Activated CD4-positive, alpha-beta T cell treated with anti-CD3 and anti-CD28 coated beads, Interleukin-2, amount 10 ng/mL, durations not matched to agents 7 days and 5 days (primary cell): ENCODE measurements at regions of chr2 and their contacts with region 1.

Region 1: GRCh38 chr2:53970724-53971602 is at the start of gene PSME4:
- DNase-seq: peak; percentile 95
- H3K4me3 Mint-ChIP-seq: peak within 1 kb of the TSS; percentile 88
- H3K27ac Mint-ChIP-seq: peak within 1 kb of the TSS; percentile 96
- H3K4me1 Mint-ChIP-seq: peaks cover 39% of the 10 kb centered on the region
- H3K27me3 Mint-ChIP-seq: no peaks in the 10 kb centered on the region
- total RNA-seq, gene PSME4: 46.7 to 50.2 TPM

Region 2: GRCh38 chr2:53952519-53952918 is 18.4 kb before region 1 on chr2:
- CTCF ChIA-PET with region 1: interaction called, 11 read pairs
- POLR2A ChIA-PET with region 1: no interaction called
- DNase-seq: no peak
- H3K4me3 Mint-ChIP-seq: no peak overlapping the region
- H3K27ac Mint-ChIP-seq: no peak overlapping the region
- H3K4me1 Mint-ChIP-seq: peaks cover 15% of the 10 kb centered on the region
- H3K27me3 Mint-ChIP-seq: no peaks in the 10 kb centered on the region